ENCODE measurements at regions of chr9 and their contacts with region 1.

Region 1: GRCh38 chr9:132507746-132508469 is 74.5 kb upstream of the BARHL1 start:
- DNase-seq: peak; percentile 90
- H3K4me3 Mint-ChIP-seq: no peak overlapping the region
- H3K27ac Mint-ChIP-seq: no peak overlapping the region
- H3K4me1 Mint-ChIP-seq: peaks cover 8% of the 10 kb centered on the region
- H3K27me3 Mint-ChIP-seq: peaks cover 13% of the 10 kb centered on the region

Region 2: DNA sequence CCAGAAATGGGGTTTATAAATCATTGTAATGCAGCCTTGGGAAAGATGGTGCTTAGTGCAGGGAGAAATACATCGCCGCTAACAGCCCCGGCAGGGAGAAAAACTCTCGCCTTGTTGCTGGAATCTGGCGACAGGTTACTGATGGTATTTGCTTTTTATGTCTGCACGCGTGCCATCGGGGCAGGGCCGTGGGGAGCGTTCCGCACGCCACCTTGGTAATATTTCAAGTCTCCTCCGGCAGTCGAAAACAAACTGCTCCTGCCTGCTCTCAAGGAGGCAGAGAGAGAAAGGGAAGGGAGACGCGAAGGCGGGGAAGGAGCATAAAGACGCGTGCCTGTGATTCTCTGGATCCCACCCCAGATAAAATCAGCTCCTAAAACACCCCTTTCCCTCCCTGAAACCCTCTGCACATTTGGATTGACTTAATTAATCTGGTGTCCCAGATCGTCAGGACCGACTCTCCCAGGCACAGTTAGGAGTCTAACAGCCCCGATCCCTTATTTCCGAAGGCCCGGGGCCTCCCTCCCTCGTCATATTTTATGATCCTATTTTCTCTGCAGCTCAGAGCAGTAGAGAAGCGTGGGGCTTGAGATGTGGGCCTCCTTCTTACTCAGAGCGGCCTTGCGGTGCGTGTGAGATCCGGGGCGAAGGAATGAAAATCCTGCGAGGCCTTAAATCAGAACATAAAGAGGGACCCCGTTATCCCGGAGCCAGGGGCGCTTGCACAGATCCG is 50.2 kb before region 1 on chr9:
- intact Hi-C with region 1: no loop called
- DNase-seq: no peak
- H3K4me3 Mint-ChIP-seq: no peak overlapping the region
- H3K27ac Mint-ChIP-seq: no peak overlapping the region
- H3K4me1 Mint-ChIP-seq: no peaks in the 10 kb centered on the region
- H3K27me3 Mint-ChIP-seq: peaks cover 8% of the 10 kb centered on the region

Region 3: GRCh38 chr9:132575005-132575609 is 67.2 kb after region 1 on chr9:
- intact Hi-C with region 1: loop called (anchors 5 kb)
- DNase-seq: peak; percentile 84
- H3K4me3 Mint-ChIP-seq: no peak overlapping the region
- H3K27ac Mint-ChIP-seq: no peak overlapping the region
- H3K4me1 Mint-ChIP-seq: no peaks in the 10 kb centered on the region
- H3K27me3 Mint-ChIP-seq: peaks cover 46% of the 10 kb centered on the region

Region 4: DNA sequence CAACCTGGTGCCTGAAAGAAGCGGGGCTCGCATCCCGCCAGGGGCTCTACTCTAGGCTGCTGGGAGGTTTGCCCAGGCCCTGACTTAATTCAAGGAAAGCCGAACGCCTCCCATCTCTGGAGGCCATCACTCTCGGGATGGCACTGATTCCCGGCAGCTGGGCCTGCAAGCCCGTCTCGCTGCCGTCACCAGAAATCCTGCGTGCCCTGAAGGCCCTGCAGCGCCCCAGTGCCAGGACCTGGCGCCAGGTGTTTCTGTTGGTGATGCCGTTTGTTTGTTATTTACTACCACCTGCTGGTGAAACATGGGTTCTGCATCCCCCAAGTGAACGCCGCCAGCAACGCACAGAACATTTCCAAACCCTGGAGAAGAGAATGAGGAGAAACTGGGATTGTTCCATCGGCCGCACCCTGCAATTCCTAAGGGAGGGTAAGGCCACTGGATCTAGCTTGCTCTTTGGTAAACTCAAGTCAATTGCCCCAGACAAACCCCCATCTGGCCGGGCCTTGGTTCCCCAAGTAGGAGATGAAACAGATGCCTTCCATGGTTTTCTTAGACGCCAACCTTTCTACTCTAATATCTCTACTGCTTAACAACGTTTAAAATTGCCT is 292.2 kb after region 1 on chr9:
- intact Hi-C with region 1: loop called (anchors 1 kb)
- DNase-seq: peak; percentile 87
- H3K4me3 Mint-ChIP-seq: no peak overlapping the region
- H3K27ac Mint-ChIP-seq: no peak overlapping the region
- H3K4me1 Mint-ChIP-seq: peaks cover 4% of the 10 kb centered on the region
- H3K27me3 Mint-ChIP-seq: peaks cover 30% of the 10 kb centered on the region

Measured in activated CD4-positive, alpha-beta T cell treated with anti-CD3 and anti-CD28 coated beads, Interleukin-2, amount 10 ng/mL, durations not matched to agents 24 days and 14 days (primary cell).